Activated naive CD4-positive, alpha-beta T cell treated with anti-CD3 and anti-CD28 coated beads for 36 hours (primary cell): ENCODE measurements at regions of chr6 and their contacts with region 1.

Region 1: GRCh38 chr6:153023977-153024708 is 21.6 kb upstream of the MTRF1L start:
- DNase-seq: peak; percentile 61
- H3K4me3 Mint-ChIP-seq: no peak overlapping the region
- H3K27ac Mint-ChIP-seq: no peak overlapping the region
- H3K4me1 Mint-ChIP-seq: peaks cover 1% of the 10 kb centered on the region
- H3K27me3 Mint-ChIP-seq: peaks cover 3% of the 10 kb centered on the region

Region 2: DNA sequence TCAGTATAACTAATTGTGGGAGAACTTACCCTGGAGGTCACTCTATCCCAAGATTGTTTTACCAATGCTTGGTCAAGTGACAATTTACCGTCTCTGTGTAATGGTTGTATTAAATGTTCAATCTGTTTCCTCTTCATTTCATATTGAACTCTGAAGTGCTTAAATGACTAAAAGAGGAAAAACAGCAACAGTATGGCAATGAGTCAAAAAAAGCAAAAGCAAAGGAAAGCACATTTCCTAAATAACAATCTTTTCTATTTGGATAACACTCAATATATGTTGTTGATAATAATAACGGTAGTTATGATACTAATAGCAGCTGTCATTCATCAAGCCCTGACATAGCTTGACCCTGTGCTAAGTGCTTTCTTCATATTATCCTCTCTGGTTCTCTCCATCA is 539.3 kb before region 1 on chr6:
- CTCF ChIA-PET with region 1: no interaction called
- intact Hi-C with region 1: loop called (anchors 10 kb)
- DNase-seq: no peak
- H3K4me3 Mint-ChIP-seq: no peak overlapping the region
- H3K27ac Mint-ChIP-seq: no peak overlapping the region
- H3K4me1 Mint-ChIP-seq: no peaks in the 10 kb centered on the region
- H3K27me3 Mint-ChIP-seq: peaks cover 7% of the 10 kb centered on the region

Region 3: DNA sequence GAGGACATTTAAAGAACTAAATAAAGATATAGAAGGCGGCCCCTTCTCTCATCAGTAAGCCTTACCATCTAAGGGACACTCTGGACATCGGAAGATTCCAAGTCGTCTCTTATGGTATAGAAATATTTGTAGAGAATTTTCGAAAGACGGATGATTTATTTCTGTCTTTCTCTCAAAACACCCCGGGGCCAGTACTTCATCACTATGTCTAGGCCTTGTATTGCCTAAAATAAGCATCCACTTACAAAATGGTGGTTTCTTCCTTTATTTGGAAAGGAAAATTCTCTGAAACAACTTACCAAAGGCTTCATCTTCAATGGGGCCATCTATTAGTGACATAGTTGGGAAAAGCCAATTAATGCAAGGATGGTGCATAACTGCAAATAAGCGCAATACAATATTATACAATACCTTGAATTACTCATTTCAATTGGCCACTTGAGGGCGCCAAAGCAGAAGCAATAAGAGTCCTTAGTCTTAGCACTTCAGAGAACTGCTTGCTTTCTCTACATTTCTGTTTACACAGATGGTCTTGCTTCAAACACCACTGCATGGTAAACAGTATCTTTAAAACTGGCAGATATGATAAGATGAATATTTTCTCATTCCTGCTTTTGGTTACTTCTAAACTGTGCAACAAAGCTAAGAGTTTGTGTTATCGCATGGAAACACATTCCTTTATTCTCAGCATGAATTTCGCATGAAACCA is 160.4 kb before region 1 on chr6:
- CTCF ChIA-PET with region 1: interaction called, 31 read pairs
- intact Hi-C with region 1: loop called (anchors 1 kb)
- DNase-seq: peak; percentile 81
- H3K4me3 Mint-ChIP-seq: no peak overlapping the region
- H3K27ac Mint-ChIP-seq: no peak overlapping the region
- H3K4me1 Mint-ChIP-seq: no peaks in the 10 kb centered on the region
- H3K27me3 Mint-ChIP-seq: peaks cover 16% of the 10 kb centered on the region

Region 4: GRCh38 chr6:152954443-152954842 is 69.7 kb before region 1 on chr6:
- CTCF ChIA-PET with region 1: interaction called, 15 read pairs
- intact Hi-C with region 1: loop called (anchors 1 kb)
- DNase-seq: no peak
- H3K4me3 Mint-ChIP-seq: no peak overlapping the region
- H3K27ac Mint-ChIP-seq: no peak overlapping the region
- H3K4me1 Mint-ChIP-seq: no peaks in the 10 kb centered on the region
- H3K27me3 Mint-ChIP-seq: peaks cover 18% of the 10 kb centered on the region

Region 5: GRCh38 chr6:153002607-153003365 is 21.4 kb before region 1 on chr6 and contains the start of gene MTRF1L:
- CTCF ChIA-PET with region 1: interaction called, 4 read pairs
- intact Hi-C with region 1: loop called (anchors 1 kb)
- DNase-seq: peak; percentile 95
- H3K4me3 Mint-ChIP-seq: peak within 1 kb of the TSS; percentile 98
- H3K27ac Mint-ChIP-seq: peak within 1 kb of the TSS; percentile 94
- H3K4me1 Mint-ChIP-seq: peaks cover 33% of the 10 kb centered on the region
- H3K27me3 Mint-ChIP-seq: no peaks in the 10 kb centered on the region
- total RNA-seq, gene MTRF1L: 11.6 to 12.0 TPM